ENCODE measurements at regions of chr5 and their contacts with region 1.

Region 1: DNA sequence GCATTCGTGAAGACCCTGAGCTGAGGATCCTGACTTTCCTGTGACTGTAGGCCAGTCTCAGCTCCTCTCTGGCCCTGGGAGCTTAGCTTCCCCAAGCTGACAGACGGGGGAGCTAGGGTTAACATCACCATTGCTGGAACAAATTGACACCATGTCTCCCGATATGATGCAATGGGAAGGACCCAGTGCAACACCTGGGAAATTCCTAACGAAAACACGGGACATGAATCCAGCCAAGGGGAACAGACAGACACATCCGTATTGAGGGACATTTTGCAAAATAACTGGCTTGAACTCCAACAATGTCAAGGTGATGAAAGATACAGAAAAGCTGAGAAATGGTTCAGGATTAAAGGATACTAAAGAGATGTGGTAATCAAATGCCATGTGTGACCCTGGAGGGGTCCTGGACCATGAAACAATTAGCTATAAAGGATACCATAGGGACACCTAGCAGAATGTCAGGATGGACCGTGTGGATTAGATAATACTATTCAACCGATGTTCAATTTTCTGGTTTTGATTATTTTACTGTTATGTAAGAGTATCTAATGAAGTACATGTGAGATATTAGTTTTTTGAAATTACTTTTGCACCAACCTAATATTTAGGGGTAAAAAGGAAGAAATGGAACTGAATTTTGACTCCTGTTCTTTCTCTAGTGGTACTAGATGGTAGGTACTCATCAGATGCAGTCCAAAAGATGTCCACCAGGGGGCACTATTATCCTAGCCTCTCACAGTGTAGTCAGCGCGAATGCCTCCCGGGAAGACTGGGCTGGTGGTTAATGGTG is 52.7 kb downstream of the NDST1 start:
- DNase-seq: peak; percentile 82
- H3K4me3 ChIP-seq: no peak overlapping the region; a peak in 1 of 4 replicates
- H3K27ac ChIP-seq: no peak overlapping the region
- H3K4me1 ChIP-seq: peaks cover 6 to 13% of the 10 kb centered on the region in 2 experiments; a peak in 2 of 4 replicates
- H3K27me3 ChIP-seq: no peaks in the 10 kb centered on the region
- CTCF ChIP-seq: peak; percentile 87
- EP300 ChIP-seq: no peak
- RAD21 ChIP-seq: peak; percentile 98

Region 2: GRCh38 chr5:149878039-149878747 is 682.4 kb before region 1 on chr5:
- CTCF ChIA-PET with region 1: no interaction called
- POLR2A ChIA-PET with region 1: no interaction called
- DNase-seq: no peak
- H3K4me3 ChIP-seq: no peak overlapping the region
- H3K27ac ChIP-seq: no peak overlapping the region
- H3K4me1 ChIP-seq: no peaks in the 10 kb centered on the region
- H3K27me3 ChIP-seq: no peaks in the 10 kb centered on the region; the same call in 1 of the 2 replicates
- CTCF ChIP-seq: no peak
- EP300 ChIP-seq: no peak
- RAD21 ChIP-seq: no peak

Region 3: DNA sequence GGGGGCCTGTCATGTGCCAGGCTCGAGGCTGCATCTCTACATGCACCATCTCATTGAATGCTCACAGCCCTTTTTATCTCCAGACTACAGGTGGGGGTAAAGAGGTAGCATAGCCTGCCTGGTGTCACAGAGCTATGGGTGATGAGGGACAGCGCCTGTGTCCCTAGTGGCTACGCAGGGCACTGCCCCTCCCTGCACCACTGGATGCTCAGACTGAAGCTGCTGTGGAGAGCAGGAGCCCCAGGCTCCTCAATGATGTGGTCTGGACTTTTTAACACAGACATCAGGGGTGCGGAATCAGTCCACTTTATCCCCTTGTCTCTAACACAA is 273.7 kb before region 1 on chr5:
- CTCF ChIA-PET with region 1: no interaction called
- POLR2A ChIA-PET with region 1: no interaction called
- DNase-seq: peak; percentile 90
- H3K4me3 ChIP-seq: no peak overlapping the region
- H3K27ac ChIP-seq: no peak overlapping the region; a peak in 1 of 4 replicates
- H3K4me1 ChIP-seq: peaks cover 4 to 16% of the 10 kb centered on the region in 2 experiments; a peak in 1 of 4 replicates
- H3K27me3 ChIP-seq: no peaks in the 10 kb centered on the region
- CTCF ChIP-seq: peak; percentile 48
- EP300 ChIP-seq: no peak
- RAD21 ChIP-seq: peak; percentile 59

Region 4: GRCh38 chr5:150458819-150459557 is 101.6 kb before region 1 on chr5:
- CTCF ChIA-PET with region 1: interaction called, 64 read pairs
- POLR2A ChIA-PET with region 1: no interaction called
- DNase-seq: peak; percentile 93
- H3K4me3 ChIP-seq: no peak overlapping the region; a peak in 2 of 4 replicates
- H3K27ac ChIP-seq: no peak overlapping the region
- H3K4me1 ChIP-seq: peaks cover 0 to 8% of the 10 kb centered on the region in 2 experiments; a peak in 2 of 4 replicates
- H3K27me3 ChIP-seq: no peaks in the 10 kb centered on the region
- CTCF ChIP-seq: peak; percentile 70
- EP300 ChIP-seq: no peak
- RAD21 ChIP-seq: peak; percentile 83

Region 5: GRCh38 chr5:150589871-150590601 is 29.4 kb after region 1 on chr5:
- CTCF ChIA-PET with region 1: interaction called, 41 read pairs
- POLR2A ChIA-PET with region 1: no interaction called
- DNase-seq: peak; percentile 58
- H3K4me3 ChIP-seq: no peak overlapping the region
- H3K27ac ChIP-seq: peak overlapping the region; percentile 41 to 93
- H3K4me1 ChIP-seq: peaks cover 11 to 68% of the 10 kb centered on the region in 2 experiments; a peak in 3 of 4 replicates
- H3K27me3 ChIP-seq: no peaks in the 10 kb centered on the region
- CTCF ChIP-seq: peak; percentile 54
- EP300 ChIP-seq: peak in 1 of 2 experiments; percentile 3; a peak in 1 of 4 replicates
- RAD21 ChIP-seq: peak; percentile 59

Region 6: GRCh38 chr5:150645077-150645700 is 84.6 kb after region 1 on chr5:
- CTCF ChIA-PET with region 1: interaction called, 160 read pairs
- POLR2A ChIA-PET with region 1: no interaction called
- DNase-seq: peak; percentile 67
- H3K4me3 ChIP-seq: no peak overlapping the region
- H3K27ac ChIP-seq: peak overlapping the region; percentile 36 to 93; a peak in 3 of 4 replicates
- H3K4me1 ChIP-seq: peaks cover 44 to 56% of the 10 kb centered on the region in 2 experiments
- H3K27me3 ChIP-seq: no peaks in the 10 kb centered on the region
- CTCF ChIP-seq: no peak
- EP300 ChIP-seq: no peak; a peak in 1 of 4 replicates
- RAD21 ChIP-seq: no peak; the same call in 1 of the 2 replicates

Region 7: DNA sequence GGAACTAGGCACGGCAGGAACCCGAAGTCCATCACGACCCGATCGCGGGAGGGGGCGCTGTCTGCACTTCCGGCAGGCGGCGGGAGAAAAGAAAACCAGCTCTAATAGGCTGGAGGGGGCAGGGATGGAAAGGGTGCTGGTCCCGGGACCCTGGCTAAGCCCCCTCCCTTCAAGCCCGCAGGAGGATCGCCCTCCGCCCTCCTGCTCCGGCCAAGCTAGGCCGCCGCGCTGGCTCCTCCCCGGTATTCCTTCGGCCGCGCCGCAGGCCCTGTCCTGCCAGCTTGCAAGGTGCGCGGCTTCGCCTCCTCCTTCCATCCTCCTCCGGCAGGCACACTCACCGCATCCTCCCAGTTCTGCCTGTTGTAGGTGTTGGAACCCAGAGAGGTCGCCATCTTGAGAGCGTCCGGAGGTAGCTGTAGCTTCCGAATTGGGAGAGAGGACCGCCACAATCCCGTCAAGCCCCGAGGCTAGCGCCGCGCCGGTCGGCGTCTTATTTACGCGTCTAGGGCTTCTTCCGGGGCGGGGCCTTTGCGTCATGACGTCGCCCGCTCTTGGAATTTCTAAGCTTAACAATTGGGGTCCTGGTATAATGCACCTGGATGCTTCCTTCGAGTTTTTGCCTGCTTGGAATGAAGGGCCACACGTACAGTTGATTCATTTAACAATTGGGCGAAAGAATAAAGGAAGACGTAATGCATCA is 140.1 kb after region 1 on chr5 and contains the start of gene RBM22:
- CTCF ChIA-PET with region 1: interaction called, 35 read pairs
- POLR2A ChIA-PET with region 1: interaction called, 3 read pairs
- DNase-seq: peak; percentile 87
- H3K4me3 ChIP-seq: peak within 1 kb of the TSS; percentile 76 to 98
- H3K27ac ChIP-seq: peak within 1 kb of the TSS; percentile 87 to 95
- H3K4me1 ChIP-seq: peaks cover 11 to 15% of the 10 kb centered on the region in 2 experiments
- H3K27me3 ChIP-seq: no peaks in the 10 kb centered on the region
- CTCF ChIP-seq: peak; percentile 72
- EP300 ChIP-seq: no peak
- RAD21 ChIP-seq: peak; percentile 1; the same call in 1 of the 2 replicates
- polyA plus RNA-seq, gene RBM22: 30.7 and 41.0 TPM in 2 replicates

Region 8: DNA sequence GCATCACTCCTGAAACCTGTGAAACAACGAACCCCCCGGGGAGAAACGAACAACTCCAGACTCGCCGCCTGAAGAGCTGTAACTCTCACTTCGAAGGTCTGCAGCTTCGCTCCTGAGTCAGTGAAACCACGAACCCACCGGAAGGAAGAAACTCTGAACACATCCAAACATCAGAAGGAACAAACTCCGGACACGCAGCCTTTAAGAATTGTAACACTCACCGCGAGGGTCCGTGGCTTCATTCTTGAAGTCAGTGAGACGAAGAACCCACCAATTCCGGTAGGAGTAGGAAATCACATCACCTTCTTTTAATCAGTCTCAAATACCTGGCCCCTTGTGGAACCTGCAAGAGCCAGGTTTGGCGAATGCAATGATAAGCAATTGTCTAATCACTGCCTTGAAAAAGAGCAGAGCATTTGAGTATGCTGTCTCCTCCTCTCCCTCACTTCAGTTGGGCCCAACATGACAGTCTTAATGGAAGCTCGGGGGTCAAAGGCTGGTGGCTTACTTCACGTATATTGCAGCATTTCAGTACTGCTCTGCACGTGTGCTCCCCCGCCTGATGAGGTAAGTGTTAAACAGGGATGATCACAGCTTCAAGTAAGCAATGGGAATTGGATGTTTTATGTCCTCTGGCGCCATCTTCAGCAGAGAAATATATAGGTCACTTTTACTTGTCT is 286.2 kb after region 1 on chr5:
- CTCF ChIA-PET with region 1: interaction called, 44 read pairs
- POLR2A ChIA-PET with region 1: no interaction called
- DNase-seq: peak; percentile 80
- H3K4me3 ChIP-seq: no peak overlapping the region
- H3K27ac ChIP-seq: no peak overlapping the region
- H3K4me1 ChIP-seq: no peaks in the 10 kb centered on the region; a peak in 1 of 4 replicates
- H3K27me3 ChIP-seq: no peaks in the 10 kb centered on the region
- CTCF ChIP-seq: peak; percentile 82
- EP300 ChIP-seq: no peak
- RAD21 ChIP-seq: peak; percentile 93

Measured in SK-N-SH (cell line).